PC-3 (cell line): ENCODE measurements at regions of chr7 and their contacts with region 1.

Region 1: DNA sequence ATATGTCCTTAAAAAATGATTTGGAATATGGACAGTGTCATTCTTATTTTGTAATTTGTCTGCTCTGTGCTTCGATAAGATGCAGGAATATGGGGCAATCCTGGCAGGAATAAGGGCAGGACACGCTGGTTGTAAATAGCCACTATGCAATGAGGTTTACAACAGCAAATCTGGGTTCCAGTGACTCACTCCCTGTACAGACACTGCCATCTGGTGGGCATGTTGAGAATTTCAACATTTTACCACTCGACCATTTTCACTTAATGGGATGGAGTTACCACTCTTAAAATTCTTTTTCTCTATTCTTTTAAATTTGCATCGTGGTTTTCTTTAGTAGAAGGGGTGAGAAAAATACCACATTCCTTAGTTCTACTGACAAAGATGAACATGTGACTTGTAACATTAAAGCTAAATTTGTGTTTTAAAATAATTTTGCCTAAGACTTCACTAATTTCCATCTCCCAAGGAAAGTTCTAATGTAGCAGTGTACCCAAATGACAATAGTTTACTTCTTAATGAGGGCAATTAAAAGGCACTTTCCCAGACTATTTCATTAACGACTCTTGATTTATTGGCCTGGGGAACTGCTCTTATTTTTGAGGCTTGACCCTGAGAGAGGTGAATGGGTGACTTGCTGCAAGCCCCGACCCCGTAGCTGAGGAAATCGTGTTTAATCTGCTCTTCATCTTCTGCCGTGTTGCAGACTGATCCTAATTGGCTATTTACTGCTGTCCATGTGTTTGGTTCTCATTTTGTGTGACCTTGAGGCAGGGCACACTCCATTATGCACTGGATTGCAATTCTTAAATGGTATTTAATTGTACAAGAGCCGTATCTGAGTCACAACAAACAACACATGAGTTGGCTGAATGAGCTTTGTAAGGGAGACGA is 173.6 kb upstream of the IMMP2L start:
- DNase-seq: peak; percentile 85
- ATAC-seq: peak; percentile 71
- H3K4me3 ChIP-seq: no peak overlapping the region
- H3K27ac ChIP-seq: peak overlapping the region; percentile 10; the same call in 1 of the 2 replicates
- H3K4me1 ChIP-seq: peaks cover 13% of the 10 kb centered on the region
- H3K27me3 ChIP-seq: no peaks in the 10 kb centered on the region
- CTCF ChIP-seq: peak; percentile 85

Region 2: DNA sequence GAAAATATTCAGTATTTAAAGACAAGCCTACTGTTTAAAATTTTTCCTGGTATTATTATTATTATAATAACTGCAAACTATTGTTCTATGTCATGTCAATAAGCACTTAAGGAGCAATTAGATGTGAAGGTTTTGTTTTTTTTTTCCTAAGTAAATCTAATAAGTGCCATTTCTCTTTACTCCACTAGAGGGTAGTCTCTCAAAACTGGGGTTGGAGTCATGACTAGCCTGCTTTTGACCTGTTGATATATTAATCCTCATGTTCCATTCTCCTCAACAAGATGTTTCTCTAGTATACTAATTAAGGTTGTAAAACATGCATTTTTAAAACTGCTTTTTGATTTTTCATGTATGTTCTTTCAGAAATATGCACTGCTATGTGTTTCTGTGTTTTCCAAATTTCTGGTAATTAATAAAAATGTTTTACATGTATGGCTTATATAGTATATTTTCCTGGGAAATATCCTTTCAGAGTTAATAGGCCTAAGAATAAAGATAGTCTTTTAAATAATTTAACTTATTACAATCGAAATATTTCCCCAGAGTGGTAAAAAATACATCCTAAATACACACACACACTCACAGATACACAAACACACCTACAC is 646.0 kb before region 1 on chr7:
- CTCF ChIA-PET with region 1: no interaction called
- POLR2A ChIA-PET with region 1: no interaction called
- intact Hi-C with region 1: loop called (anchors 1 kb)
- DNase-seq: peak; percentile 65
- ATAC-seq: no peak
- H3K4me3 ChIP-seq: no peak overlapping the region
- H3K27ac ChIP-seq: no peak overlapping the region
- H3K4me1 ChIP-seq: peaks cover 12% of the 10 kb centered on the region
- H3K27me3 ChIP-seq: no peaks in the 10 kb centered on the region
- CTCF ChIP-seq: peak; percentile 72

Region 3: GRCh38 chr7:111329367-111330234 is 406.3 kb before region 1 on chr7:
- CTCF ChIA-PET with region 1: no interaction called
- POLR2A ChIA-PET with region 1: no interaction called
- intact Hi-C with region 1: loop called (anchors 1 kb)
- DNase-seq: peak; percentile 21
- ATAC-seq: peak; percentile 69
- H3K4me3 ChIP-seq: no peak overlapping the region
- H3K27ac ChIP-seq: no peak overlapping the region
- H3K4me1 ChIP-seq: 0 out of 2 replicates have a peak, but pooled peaks cover 4% of the 10 kb centered on the region
- H3K27me3 ChIP-seq: no peaks in the 10 kb centered on the region
- CTCF ChIP-seq: peak; percentile 55

Region 4: GRCh38 chr7:111429781-111430180 is 306.1 kb before region 1 on chr7:
- CTCF ChIA-PET with region 1: no interaction called
- POLR2A ChIA-PET with region 1: no interaction called
- intact Hi-C with region 1: loop called (anchors 5 kb)
- DNase-seq: no peak
- ATAC-seq: no peak
- H3K4me3 ChIP-seq: no peak overlapping the region
- H3K27ac ChIP-seq: no peak overlapping the region
- H3K4me1 ChIP-seq: peaks cover 3% of the 10 kb centered on the region
- H3K27me3 ChIP-seq: no peaks in the 10 kb centered on the region
- CTCF ChIP-seq: no peak